A549 (cell line): ENCODE measurements at regions of chr1 and their contacts with region 1.

Region 1: GRCh38 chr1:110338886-110339406 is at the start of gene RBM15:
- DNase-seq: peak; percentile 89 to 100
- ATAC-seq: peak; percentile 75 to 87
- H3K4me3 ChIP-seq: peak within 1 kb of the TSS; percentile 91
- H3K27ac ChIP-seq: peak within 1 kb of the TSS; percentile 96 to 99
- H3K4me1 ChIP-seq: peaks cover 58% of the 10 kb centered on the region
- CTCF ChIP-seq: no peak
- EP300 ChIP-seq: no peak
- POLR2A ChIP-seq: no peak
- RAD21 ChIP-seq: no peak
- polyA plus RNA-seq, gene RBM15: 14.0 and 15.0 TPM in 2 replicates

Region 2: DNA sequence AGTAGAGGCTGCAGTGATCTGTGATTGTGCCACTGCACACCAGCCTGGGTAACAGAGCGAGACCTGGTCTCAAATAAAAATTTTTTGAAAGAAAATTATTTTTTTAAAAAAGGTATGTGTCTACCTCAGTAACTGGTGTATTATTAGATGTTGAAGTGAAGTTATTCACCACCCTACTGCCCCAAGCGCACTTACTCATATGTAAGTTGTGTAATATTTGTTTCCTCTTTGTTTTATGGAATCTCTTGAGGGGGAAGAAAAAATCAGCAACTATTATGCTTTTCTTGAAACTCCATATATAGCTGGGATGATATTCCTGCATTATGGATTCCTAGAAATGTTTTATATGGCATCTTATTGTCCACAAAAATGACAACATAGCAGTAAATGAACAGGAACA is 21.5 kb after region 1 on chr1:
- CTCF ChIA-PET with region 1: interaction called, 11 read pairs
- POLR2A ChIA-PET with region 1: interaction called, 4 read pairs
- DNase-seq: no peak
- ATAC-seq: no peak
- H3K4me3 ChIP-seq: no peak overlapping the region
- H3K27ac ChIP-seq: no peak overlapping the region
- H3K4me1 ChIP-seq: peaks cover 15% of the 10 kb centered on the region
- CTCF ChIP-seq: no peak
- EP300 ChIP-seq: no peak
- POLR2A ChIP-seq: no peak
- RAD21 ChIP-seq: no peak

Region 3: GRCh38 chr1:110390692-110391245 is 51.8 kb after region 1 on chr1 and contains the start of gene SLC16A4:
- CTCF ChIA-PET with region 1: interaction called, 7 read pairs
- POLR2A ChIA-PET with region 1: interaction called, 37 read pairs
- DNase-seq: peak; percentile 36 to 79
- ATAC-seq: peak; percentile 83 to 84
- H3K4me3 ChIP-seq: peak within 1 kb of the TSS; percentile 63
- H3K27ac ChIP-seq: peak within 1 kb of the TSS; percentile 91 to 92
- H3K4me1 ChIP-seq: peaks cover 65% of the 10 kb centered on the region
- CTCF ChIP-seq: no peak
- EP300 ChIP-seq: no peak
- POLR2A ChIP-seq: no peak
- RAD21 ChIP-seq: no peak
- polyA plus RNA-seq, gene SLC16A4: 176 and 188 TPM in 2 replicates

Region 4: DNA sequence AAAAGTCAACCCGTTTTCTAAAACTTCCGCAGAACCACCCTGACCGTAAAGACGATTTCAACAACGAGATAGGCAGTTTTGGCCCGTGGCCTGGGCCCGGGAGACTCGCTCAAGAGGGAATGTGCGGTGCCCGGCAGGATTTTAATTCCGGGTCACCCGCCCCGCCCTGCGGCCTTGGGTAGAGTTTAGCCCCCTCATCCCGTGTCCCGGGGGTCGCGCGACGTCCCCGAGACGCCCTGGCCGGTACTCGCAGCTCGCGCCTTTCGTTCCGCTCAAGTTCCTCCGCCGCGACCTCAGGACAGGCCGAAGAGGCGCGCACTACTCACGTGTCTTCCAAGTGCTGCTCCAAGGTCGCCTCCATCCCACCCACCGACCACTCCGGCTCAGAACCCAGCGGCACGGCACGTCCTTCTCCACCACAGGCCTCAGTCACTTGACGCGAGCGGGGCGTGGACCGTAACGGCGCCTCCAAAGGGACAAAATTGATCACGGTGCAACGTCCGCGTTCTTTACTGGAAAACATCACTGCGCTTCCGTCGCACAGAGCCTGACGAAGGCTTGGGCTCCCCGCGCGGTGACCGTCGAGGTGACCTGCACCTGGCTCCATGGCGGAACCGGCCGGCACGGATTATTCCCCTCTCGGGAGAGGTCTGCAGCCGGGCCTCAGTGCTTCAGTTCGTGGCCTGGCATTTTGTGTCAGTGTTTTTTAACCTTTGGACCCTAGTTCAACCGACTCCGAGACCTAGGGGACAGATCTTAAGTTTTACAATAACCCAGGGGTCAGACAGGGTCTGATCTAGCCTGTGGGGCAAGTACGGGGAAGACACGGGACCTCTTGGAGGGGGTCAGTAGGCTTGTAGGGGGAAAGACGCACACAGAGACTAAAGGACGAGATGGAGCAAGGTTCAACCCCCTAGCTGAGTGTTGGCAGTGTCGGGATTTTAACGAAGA is 68.6 kb after region 1 on chr1 and contains the start of gene LAMTOR5:
- CTCF ChIA-PET with region 1: interaction called, 12 read pairs
- POLR2A ChIA-PET with region 1: interaction called, 18 read pairs
- DNase-seq: peak; percentile 61 to 94
- ATAC-seq: peak; percentile 95 to 96
- H3K4me3 ChIP-seq: peak within 1 kb of the TSS; percentile 98
- H3K27ac ChIP-seq: peak within 1 kb of the TSS; percentile 98 to 99
- H3K4me1 ChIP-seq: peaks cover 14% of the 10 kb centered on the region
- CTCF ChIP-seq: no peak
- EP300 ChIP-seq: no peak
- POLR2A ChIP-seq: peak; percentile 69
- RAD21 ChIP-seq: peak; percentile 31 to 49; a peak in 3 of 5 replicates
- polyA plus RNA-seq, gene LAMTOR5: 256 and 314 TPM in 2 replicates

Region 5: DNA sequence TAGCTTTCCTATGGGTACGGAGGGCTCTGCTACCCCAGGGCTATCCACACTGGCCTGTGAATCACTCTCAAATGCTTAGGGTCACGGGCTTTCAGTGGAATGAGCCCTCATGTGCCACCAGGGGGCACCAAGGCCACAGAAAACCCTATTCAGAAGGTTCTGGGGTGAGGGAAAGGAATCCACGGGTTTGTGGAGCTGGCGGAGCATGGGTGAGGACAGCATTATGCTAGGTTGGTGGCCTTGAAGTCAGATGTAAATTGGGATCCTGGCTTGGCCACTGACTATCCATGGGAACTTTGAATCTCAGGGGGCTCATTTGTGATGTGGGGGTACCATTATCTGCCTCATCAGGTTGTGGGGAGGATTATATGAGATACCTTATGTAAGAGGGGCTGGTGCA is 73.6 kb after region 1 on chr1:
- CTCF ChIA-PET with region 1: interaction called, 12 read pairs
- POLR2A ChIA-PET with region 1: interaction called, 18 read pairs
- DNase-seq: peak; percentile 57 to 63
- ATAC-seq: peak; percentile 91
- H3K4me3 ChIP-seq: no peak overlapping the region
- H3K27ac ChIP-seq: peak overlapping the region in 1 of 2 experiments; percentile 58; a peak in 1 of 6 replicates
- H3K4me1 ChIP-seq: peaks cover 10% of the 10 kb centered on the region
- CTCF ChIP-seq: peak; percentile 75
- EP300 ChIP-seq: no peak
- POLR2A ChIP-seq: no peak
- RAD21 ChIP-seq: peak; percentile 82 to 86

Region 6: DNA sequence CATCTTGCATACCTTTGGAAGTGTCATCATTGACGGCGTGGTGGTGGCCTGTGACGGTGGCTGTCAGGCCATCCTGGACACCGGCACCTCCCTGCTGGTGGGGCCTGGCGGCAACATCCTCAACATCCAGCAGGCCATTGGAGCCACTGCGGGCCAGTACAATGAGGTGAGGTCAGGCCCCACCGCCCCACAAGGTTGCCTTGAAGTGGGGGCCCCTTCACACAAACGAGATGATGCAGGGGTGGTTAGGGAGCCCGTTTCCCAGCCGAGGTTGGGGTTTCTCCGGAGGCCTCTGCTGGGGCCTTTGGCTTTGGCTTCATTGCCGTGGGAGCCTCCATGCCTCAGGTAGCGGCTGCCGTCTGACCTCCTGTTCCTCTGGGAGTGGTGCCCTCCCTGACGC is 150.5 kb after region 1 on chr1:
- CTCF ChIA-PET with region 1: no interaction called
- POLR2A ChIA-PET with region 1: no interaction called
- DNase-seq: no peak
- ATAC-seq: no peak
- H3K4me3 ChIP-seq: no peak overlapping the region
- H3K27ac ChIP-seq: no peak overlapping the region
- H3K4me1 ChIP-seq: peaks cover 6% of the 10 kb centered on the region; the same call in 1 of the 3 replicates
- CTCF ChIP-seq: no peak
- EP300 ChIP-seq: no peak
- POLR2A ChIP-seq: no peak
- RAD21 ChIP-seq: no peak